HEK293 (cell line): ENCODE measurements at regions of chr17 and their contacts with region 1.

Region 1: DNA sequence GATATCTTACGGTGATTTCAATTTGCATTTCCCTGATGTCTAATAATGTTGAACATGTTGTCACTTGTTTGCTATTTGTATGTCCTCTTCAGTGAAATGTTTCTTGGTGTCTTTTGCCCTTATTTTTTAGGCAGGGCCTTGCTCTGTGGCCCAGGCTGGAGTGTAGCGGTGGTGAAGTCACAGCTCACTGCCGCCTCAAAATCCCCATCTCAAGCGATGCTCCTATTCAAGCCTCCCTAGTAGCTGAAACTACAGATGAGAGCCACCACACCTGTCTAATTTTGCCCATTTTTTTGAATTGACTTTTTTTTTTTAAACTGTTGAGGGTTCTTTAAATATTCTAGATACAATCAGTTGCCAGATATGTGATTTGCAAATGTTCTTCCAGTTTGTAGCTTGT is 8.3 kb downstream of the UBE2G1 start:
- H3K4me3 ChIP-seq: no peak overlapping the region
- H3K27ac ChIP-seq: no peak overlapping the region
- H3K4me1 ChIP-seq: peaks cover 28% of the 10 kb centered on the region
- CTCF ChIP-seq: no peak

Region 2: DNA sequence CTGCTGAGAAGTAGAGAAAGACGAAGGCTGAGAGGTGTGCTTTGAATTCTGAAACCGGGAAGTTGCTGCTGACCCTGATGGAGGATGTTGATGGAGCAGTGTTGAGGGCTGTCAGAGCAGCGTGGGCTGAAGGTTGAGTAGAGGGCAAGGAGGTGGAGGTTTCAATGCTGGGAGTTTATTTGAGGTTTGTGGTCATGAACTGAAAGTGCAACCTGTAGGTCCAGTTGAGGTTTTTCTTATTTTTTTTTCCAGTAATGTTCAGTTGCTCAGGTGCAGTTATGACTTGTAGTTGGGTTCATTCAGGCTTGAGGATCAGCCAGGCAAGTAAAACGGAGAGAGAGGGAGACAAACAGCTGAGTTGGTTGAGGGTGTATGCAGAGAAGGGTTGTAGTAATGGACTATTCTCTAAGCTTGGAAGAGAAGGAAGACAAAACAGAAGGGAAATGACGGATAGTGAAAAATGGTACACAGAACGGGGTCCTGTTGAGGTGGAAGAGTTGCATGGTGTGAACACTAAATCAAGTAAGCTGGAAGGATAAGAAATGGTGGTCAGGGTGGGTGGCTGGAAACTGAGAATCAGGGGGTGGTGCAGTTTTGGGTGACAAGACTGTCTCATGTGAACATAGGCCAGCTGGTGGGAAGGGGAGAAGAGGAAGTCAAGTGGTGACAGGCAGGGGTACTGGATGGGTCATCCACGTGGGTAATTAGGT is 17.0 kb after region 1 on chr17:
- CTCF ChIA-PET with region 1: no interaction called
- POLR2A ChIA-PET with region 1: interaction called, 12 read pairs
- H3K4me3 ChIP-seq: no peak overlapping the region
- H3K27ac ChIP-seq: no peak overlapping the region
- H3K4me1 ChIP-seq: no peaks in the 10 kb centered on the region
- CTCF ChIP-seq: no peak

Region 3: DNA sequence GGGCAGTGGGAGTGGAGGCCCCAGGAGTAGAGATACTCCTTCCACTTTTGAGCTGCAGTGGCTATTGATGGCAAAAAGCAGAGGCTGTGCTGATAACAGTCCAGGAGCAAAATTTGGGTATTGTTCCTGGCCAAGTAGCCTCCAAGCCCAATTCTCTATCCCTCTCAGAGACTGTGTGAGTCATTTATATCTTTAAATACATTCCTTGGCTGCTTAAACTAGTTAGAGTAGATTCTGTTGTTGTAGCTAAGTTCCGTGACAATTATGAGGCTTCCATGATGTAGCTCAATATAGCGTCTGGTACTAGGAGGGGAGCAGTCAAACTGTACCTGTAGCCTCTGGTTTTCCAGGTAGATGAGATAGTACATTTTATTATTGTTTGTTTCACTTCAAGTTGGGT is 28.3 kb after region 1 on chr17:
- CTCF ChIA-PET with region 1: no interaction called
- POLR2A ChIA-PET with region 1: no interaction called
- H3K4me3 ChIP-seq: no peak overlapping the region
- H3K27ac ChIP-seq: no peak overlapping the region
- H3K4me1 ChIP-seq: no peaks in the 10 kb centered on the region
- CTCF ChIP-seq: no peak